Activated CD8-positive, alpha-beta T cell treated with anti-CD3 and anti-CD28 coated beads for 36 hours (primary cell): ENCODE measurements at regions of chr1 and their contacts with region 1.

Region 1: GRCh38 chr1:54488779-54489626 is 59.0 kb upstream of the ACOT11 start:
- DNase-seq: peak; percentile 66
- ATAC-seq: peak; percentile 62
- H3K4me3 Mint-ChIP-seq: peak overlapping the region; percentile 73
- H3K27ac Mint-ChIP-seq: peak overlapping the region; percentile 55
- H3K4me1 Mint-ChIP-seq: peaks cover 26% of the 10 kb centered on the region
- H3K27me3 Mint-ChIP-seq: peaks cover 9% of the 10 kb centered on the region
- CTCF ChIP-seq: peak; percentile 99

Region 2: GRCh38 chr1:54121482-54122134 is 367.4 kb before region 1 on chr1:
- CTCF ChIA-PET with region 1: interaction called, 14 read pairs
- POLR2A ChIA-PET with region 1: interaction called, 3 read pairs
- intact Hi-C with region 1: loop called (anchors 10 kb)
- DNase-seq: peak; percentile 79
- ATAC-seq: peak; percentile 94
- H3K4me3 Mint-ChIP-seq: no peak overlapping the region
- H3K27ac Mint-ChIP-seq: no peak overlapping the region
- H3K4me1 Mint-ChIP-seq: peaks cover 8% of the 10 kb centered on the region
- H3K27me3 Mint-ChIP-seq: peaks cover 3% of the 10 kb centered on the region
- CTCF ChIP-seq: peak; percentile 78

Region 3: GRCh38 chr1:54271341-54271740 is 217.7 kb before region 1 on chr1:
- CTCF ChIA-PET with region 1: interaction called, 10 read pairs
- POLR2A ChIA-PET with region 1: interaction called, 4 read pairs
- intact Hi-C with region 1: no loop called
- DNase-seq: no peak
- ATAC-seq: no peak
- H3K4me3 Mint-ChIP-seq: no peak overlapping the region
- H3K27ac Mint-ChIP-seq: no peak overlapping the region
- H3K4me1 Mint-ChIP-seq: peaks cover 28% of the 10 kb centered on the region
- H3K27me3 Mint-ChIP-seq: no peaks in the 10 kb centered on the region
- CTCF ChIP-seq: no peak

Region 4: DNA sequence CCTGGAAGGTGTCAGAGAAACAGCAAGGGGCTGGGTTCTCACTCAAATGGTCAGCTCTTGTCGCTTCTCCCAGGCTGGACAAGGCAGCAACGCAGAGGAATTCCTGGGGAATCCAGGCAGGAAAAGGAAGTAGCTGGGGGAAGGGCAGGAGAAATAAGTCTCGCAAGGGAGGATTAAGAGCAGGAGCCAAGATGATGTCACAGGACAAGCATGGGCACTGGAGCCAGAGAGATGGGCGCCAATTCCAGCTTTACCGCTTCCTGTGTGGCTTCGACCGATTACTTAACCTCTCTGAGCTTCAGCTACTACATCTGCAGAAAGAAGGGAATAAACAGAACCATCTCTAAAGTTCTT is 153.3 kb before region 1 on chr1:
- CTCF ChIA-PET with region 1: no interaction called
- POLR2A ChIA-PET with region 1: no interaction called
- intact Hi-C with region 1: no loop called
- DNase-seq: no peak
- ATAC-seq: no peak
- H3K4me3 Mint-ChIP-seq: no peak overlapping the region
- H3K27ac Mint-ChIP-seq: no peak overlapping the region
- H3K4me1 Mint-ChIP-seq: peaks cover 54% of the 10 kb centered on the region
- H3K27me3 Mint-ChIP-seq: no peaks in the 10 kb centered on the region
- CTCF ChIP-seq: no peak

Region 5: GRCh38 chr1:54361342-54361741 is 127.7 kb before region 1 on chr1:
- CTCF ChIA-PET with region 1: interaction called, 4 read pairs
- POLR2A ChIA-PET with region 1: no interaction called
- intact Hi-C with region 1: loop called (anchors 2 kb)
- DNase-seq: no peak
- ATAC-seq: no peak
- H3K4me3 Mint-ChIP-seq: no peak overlapping the region
- H3K27ac Mint-ChIP-seq: peak overlapping the region; percentile 4
- H3K4me1 Mint-ChIP-seq: peaks cover 75% of the 10 kb centered on the region
- H3K27me3 Mint-ChIP-seq: no peaks in the 10 kb centered on the region
- CTCF ChIP-seq: no peak

Region 6: DNA sequence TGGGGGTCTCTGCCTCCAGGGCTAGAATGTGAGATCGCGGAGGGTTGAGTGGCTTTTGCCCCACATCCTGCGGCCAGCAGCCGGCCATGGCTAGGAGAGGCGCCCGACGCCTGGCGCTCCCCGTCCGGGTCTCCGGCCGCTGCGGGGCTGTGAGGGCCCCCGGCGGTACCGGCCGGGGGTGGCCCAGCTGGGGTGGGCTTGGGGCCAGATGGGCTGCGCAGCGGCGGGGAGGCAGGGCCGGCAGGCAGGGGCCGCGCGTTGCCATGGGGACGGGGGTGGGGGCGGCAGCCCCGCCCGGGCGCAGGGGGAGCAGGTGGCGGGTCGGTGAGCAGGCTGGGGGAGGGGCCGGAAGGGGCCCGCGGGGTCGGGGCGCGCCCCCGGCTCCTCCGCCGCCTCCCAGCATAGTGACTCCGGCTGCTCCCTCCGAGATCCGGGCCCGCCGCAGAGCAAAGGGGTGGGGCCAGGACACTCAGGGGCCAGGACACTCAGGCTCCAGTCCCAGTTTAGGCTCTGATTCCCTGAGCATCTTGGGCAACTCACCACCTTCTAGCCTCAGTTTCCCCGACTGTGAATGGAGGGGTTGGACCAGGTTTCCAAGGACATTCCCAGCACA is 14.3 kb before region 1 on chr1:
- CTCF ChIA-PET with region 1: interaction called, 12 read pairs
- POLR2A ChIA-PET with region 1: interaction called, 7 read pairs
- intact Hi-C with region 1: no loop called
- DNase-seq: peak; percentile 54
- ATAC-seq: peak; percentile 67
- H3K4me3 Mint-ChIP-seq: peak overlapping the region; percentile 60
- H3K27ac Mint-ChIP-seq: peak overlapping the region; percentile 70
- H3K4me1 Mint-ChIP-seq: peaks cover 46% of the 10 kb centered on the region
- H3K27me3 Mint-ChIP-seq: peaks cover 5% of the 10 kb centered on the region
- CTCF ChIP-seq: no peak

Region 7: DNA sequence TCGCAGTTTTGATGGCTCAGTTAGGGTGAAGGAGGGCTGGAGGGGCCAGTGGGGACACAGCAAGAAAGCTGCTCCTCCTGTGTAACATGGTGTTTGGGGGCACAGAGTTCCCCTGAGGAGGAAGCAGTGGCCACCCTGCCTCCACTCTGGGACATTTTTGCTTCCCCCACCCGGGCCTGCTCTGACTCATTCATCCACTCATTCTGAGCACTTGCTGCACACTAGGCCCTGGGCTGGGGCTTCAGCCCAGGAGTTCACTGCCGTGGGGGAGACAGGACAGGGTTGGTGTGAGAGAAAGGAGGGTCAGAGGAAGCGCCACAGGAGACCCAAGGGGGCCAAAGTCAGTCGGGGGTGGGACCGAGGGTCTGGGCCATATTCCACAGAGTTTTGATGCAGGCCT is 17.6 kb after region 1 on chr1:
- CTCF ChIA-PET with region 1: interaction called, 12 read pairs
- POLR2A ChIA-PET with region 1: no interaction called
- intact Hi-C with region 1: no loop called
- DNase-seq: no peak
- ATAC-seq: peak; percentile 47
- H3K4me3 Mint-ChIP-seq: no peak overlapping the region
- H3K27ac Mint-ChIP-seq: no peak overlapping the region
- H3K4me1 Mint-ChIP-seq: no peaks in the 10 kb centered on the region
- H3K27me3 Mint-ChIP-seq: peaks cover 4% of the 10 kb centered on the region
- CTCF ChIP-seq: no peak